Left cardiac atrium (tissue), 4 donors: ENCODE measurements at regions of chr5 and their contacts with region 1.

Region 1: DNA sequence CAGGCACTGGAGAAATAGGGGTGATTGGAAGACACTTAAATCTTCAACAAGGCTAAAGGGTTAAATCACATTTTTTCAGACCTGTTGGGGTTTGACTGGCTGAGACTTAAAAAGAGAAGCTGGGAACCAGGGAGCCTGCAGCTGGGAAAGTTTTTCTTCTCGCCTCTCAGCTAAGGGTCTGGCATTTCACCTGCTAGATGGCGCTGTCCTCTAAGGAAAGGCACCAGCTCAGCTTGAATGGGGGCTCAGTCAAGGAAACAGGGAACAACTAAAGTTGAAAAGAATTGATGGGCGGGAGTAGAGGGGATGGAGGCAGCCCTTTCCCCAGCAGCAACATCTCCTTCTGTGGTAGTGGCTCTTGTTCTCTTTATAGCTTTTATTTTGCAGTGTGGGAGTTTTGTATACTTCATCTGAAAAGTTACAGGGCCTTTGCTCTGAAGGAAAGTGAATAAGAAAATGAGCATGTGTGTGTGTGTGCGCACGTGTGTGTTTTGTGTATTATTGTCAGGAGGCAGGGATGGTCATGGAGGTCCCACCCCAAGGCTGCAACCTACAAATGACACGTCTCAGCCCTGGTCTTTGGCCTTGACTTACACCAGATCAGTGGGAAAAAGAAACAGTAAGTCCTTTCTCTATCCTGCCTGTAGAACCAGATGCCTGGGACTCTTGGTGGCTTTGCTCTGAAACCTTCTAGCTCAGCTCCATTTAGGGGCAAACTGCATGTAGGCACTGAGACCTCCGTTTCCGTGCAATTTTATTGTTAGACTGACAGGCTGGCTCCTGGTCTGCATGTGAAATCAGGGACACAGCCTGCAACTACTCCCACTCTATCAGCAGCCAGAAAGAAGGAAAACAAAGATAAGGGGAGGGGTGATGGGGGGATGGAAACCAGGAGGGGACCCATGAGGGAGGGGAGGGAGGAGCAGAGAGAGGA is 316.2 kb upstream of the CLINT1 start:
- DNase-seq: peak; percentile 73
- ATAC-seq: peak; percentile 89 to 93

Region 2: GRCh38 chr5:158456756-158457155 is 281.6 kb after region 1 on chr5:
- intact Hi-C with region 1: loop called in 1 of 2 experiments (anchors 10 kb)
- DNase-seq: peak; percentile 34
- ATAC-seq: peak in 1 of 2 donors; percentile 91

Region 3: GRCh38 chr5:158695595-158696330 is 520.6 kb after region 1 on chr5:
- intact Hi-C with region 1: loop called (anchors 5 to 10 kb)
- DNase-seq: peak; percentile 71
- ATAC-seq: peak; percentile 65 to 86